Naive thymus-derived CD8-positive, alpha-beta T cell (primary cell): ENCODE measurements at regions of chr6 and their contacts with region 1.

Region 1: GRCh38 chr6:33344701-33345697 is 27.5 kb upstream of the ZBTB22 start:
- DNase-seq: peak; percentile 46 to 88 (median 74)
- ATAC-seq: peak; percentile 56 to 64
- H3K4me3 Mint-ChIP-seq: peak overlapping the region; percentile 73 to 91 (median 84)
- H3K27ac Mint-ChIP-seq: peak overlapping the region; percentile 91 to 99 (median 96)
- H3K4me1 Mint-ChIP-seq: peaks cover 28 to 54% (median 48%) of the 10 kb centered on the region in 4 donors
- H3K27me3 Mint-ChIP-seq: no peaks in the 10 kb centered on the region

Region 2: DNA sequence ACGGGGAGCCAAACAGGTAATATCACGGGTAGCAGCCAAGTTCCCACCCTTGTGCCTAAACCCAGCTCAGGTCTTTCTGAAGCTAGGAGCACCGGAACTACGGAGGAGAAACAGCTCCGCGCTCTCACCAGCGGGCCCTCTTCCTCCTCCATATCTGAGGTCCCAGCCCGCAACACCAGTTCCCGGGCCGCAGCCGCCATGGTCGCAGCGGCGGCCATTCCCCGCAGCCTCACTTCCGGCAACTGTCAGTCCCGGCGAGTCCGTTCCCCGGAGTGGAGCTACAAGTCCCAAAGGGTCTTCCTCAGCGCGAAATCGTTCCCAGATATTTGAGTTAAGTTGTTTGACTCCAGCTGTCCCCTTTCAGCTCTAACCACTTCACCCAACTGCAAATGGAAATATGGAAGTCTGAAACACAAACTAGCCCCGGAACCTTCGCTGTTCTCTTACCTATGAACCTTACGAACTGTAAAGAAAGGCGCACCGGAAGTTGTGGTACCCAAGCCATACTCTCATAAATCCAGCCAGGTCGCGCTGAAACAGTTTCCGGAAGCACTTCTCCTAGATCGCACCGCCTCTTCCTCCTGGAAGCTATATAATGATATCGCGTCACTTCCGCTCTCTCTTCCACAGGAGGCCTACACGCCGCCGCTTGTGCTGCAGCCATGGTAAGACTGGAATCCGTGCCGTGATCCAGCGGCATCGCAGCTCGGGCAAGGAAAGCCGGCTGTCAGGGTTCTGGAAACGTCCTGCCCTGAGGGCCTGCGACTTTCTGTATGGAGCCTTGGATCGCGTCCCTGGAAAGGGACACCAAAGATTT is 73.3 kb before region 1 on chr6 and contains the starts of genes RPS18 and VPS52:
- POLR2A ChIA-PET with region 1: interaction called, 71 read pairs
- DNase-seq: peak; percentile 78 to 100 (median 94)
- ATAC-seq: peak; percentile 86 to 88
- H3K4me3 Mint-ChIP-seq: peak within 1 kb of the TSS; percentile 92 to 99 (median 96)
- H3K27ac Mint-ChIP-seq: peak within 1 kb of the TSS; percentile 99 to 100 (median 99)
- H3K4me1 Mint-ChIP-seq: peaks cover 34 to 71% (median 70%) of the 10 kb centered on the region in 4 donors
- H3K27me3 Mint-ChIP-seq: no peaks in the 10 kb centered on the region
- polyA plus RNA-seq, gene RPS18: 9,896 to 11,320 (median 11,293) TPM
- polyA plus RNA-seq, gene VPS52: 9.3 to 19.3 (median 15.2) TPM

Region 3: DNA sequence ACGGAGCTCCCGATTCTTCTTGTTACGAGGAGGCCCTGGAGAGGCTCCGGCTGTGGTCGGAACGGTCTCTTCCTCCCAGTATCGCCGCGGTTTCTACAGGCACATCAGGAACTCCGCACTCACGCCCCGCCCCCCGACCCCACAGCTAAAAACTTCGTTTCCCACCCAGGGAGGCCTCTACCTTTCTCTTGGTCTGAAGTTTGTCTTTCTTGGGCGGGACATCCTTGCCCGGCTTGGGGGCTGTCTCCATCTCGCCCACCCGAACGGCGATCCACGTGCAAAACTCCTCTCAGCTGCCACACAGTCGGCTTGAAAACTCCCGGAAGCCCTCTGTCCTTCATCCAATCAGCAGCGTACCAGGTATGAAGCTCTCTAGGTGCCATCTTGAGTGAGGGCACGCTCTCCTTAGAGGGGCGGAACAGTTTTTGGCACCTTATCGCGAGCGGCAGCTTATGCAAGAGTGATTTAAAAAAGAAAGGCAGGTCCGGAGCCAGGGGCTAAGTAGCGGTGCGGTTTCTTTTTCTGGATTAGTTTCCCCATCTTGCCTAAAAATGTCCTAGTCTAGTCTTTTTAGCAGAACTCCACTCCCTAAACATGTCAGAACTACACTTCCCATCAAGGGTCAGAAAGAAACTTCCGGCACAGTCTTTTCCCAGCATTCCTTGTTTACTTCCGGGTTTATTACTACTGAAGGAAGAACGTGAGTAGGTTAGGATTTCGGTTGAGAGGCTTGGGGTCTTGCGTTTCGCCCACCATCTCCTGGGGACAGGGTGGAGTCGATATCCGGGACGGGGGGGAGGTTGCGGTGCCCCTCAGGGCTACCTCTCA is 55.9 kb before region 1 on chr6 and contains the starts of genes PFDN6 and WDR46:
- POLR2A ChIA-PET with region 1: interaction called, 52 read pairs
- DNase-seq: peak; percentile 53 to 91 (median 81)
- ATAC-seq: peak; percentile 96 to 97
- H3K4me3 Mint-ChIP-seq: peak within 1 kb of the TSS; percentile 87 to 100 (median 99)
- H3K27ac Mint-ChIP-seq: peak within 1 kb of the TSS; percentile 84 to 97 (median 94)
- H3K4me1 Mint-ChIP-seq: peaks cover 22 to 51% (median 48%) of the 10 kb centered on the region in 4 donors
- H3K27me3 Mint-ChIP-seq: no peaks in the 10 kb centered on the region
- polyA plus RNA-seq, gene PFDN6: 33.4 to 38.2 (median 35.5) TPM
- polyA plus RNA-seq, gene WDR46: 71.3 to 83.7 (median 74.1) TPM

Region 4: DNA sequence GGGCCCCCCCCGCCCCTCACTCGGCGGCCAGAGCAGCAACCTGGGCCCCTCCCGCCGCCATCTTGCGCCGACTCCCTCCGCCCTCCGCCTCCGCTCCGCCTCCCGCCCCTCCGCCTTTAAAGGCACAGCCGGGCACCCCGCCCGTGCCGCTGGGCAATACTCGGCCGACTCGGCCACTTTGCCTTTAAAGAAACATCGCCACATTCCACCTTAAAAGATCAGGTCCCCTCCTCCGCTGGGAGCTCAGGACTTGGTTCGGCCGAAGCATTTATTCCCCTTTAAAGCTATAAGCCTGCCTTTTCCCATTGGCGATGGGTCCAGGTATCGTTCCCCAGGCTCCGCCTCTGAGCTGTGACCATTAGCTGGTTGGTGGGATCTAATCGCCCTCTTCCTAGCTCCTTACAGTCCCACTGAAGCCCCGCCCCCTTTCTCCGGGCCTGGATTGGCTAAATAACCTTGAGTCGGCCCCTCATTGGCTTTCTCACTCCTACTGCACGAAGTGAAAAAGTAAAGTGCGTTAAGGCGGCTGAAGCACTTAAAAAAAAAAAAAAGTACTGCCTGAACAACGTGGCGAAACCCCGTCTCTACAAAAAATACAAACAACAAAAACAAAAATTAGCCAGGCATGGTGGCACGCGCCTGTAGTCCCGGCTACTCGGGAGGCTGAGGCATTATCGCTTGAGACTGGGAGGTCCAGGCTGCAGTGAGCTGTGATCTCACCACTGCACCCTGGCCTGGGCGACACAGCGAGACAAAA is 27.2 kb before region 1 on chr6 and contains the start of gene ZBTB22:
- POLR2A ChIA-PET with region 1: interaction called, 141 read pairs
- DNase-seq: peak; percentile 89 to 98 (median 94)
- ATAC-seq: peak; percentile 59 to 62
- H3K4me3 Mint-ChIP-seq: peak within 1 kb of the TSS in 9 of 10 donors; percentile 96 to 100 (median 99)
- H3K27ac Mint-ChIP-seq: peak within 1 kb of the TSS; percentile 95 to 100 (median 98)
- H3K4me1 Mint-ChIP-seq: peaks cover 36 to 87% (median 79%) of the 10 kb centered on the region in 4 donors
- H3K27me3 Mint-ChIP-seq: no peaks in the 10 kb centered on the region
- polyA plus RNA-seq, gene ZBTB22: 10.4 to 13.4 (median 10.7) TPM

Region 5: DNA sequence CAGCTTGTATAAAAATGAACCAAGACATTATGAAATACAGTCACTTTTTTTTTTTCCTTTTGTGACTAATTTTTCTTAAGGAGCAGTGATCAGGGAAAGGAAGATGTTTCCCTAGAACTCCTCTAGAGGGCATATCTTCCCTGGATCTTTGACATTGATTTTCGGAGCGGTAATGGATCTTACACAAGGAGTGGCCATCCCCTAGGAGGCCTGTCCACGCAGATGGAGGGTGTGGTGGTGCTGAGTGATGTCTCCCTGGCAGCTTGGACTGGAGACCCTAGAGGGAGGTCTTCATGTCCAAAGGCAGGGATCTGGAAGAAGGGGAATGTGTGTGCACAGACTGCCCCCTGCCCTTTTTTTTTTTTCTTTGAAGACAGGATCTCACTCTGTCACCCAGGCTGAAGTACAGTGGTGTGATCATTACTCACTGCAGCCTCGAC is 39.6 kb after region 1 on chr6:
- POLR2A ChIA-PET with region 1: no interaction called
- DNase-seq: no peak
- ATAC-seq: no peak
- H3K4me3 Mint-ChIP-seq: no peak overlapping the region
- H3K27ac Mint-ChIP-seq: peak overlapping the region in 1 of 10 donors; percentile 24
- H3K4me1 Mint-ChIP-seq: peaks cover 0 to 2% (median 0%) of the 10 kb centered on the region in 4 donors
- H3K27me3 Mint-ChIP-seq: no peaks in the 10 kb centered on the region

Region 6: GRCh38 chr6:33410050-33410710 is 65.2 kb after region 1 on chr6:
- POLR2A ChIA-PET with region 1: interaction called, 19 read pairs
- DNase-seq: peak; percentile 94 to 99 (median 96)
- ATAC-seq: peak; percentile 72 to 83
- H3K4me3 Mint-ChIP-seq: peak overlapping the region; percentile 74 to 96 (median 90)
- H3K27ac Mint-ChIP-seq: peak overlapping the region; percentile 63 to 99 (median 98)
- H3K4me1 Mint-ChIP-seq: peaks cover 20 to 53% (median 44%) of the 10 kb centered on the region in 4 donors
- H3K27me3 Mint-ChIP-seq: no peaks in the 10 kb centered on the region

Region 7: DNA sequence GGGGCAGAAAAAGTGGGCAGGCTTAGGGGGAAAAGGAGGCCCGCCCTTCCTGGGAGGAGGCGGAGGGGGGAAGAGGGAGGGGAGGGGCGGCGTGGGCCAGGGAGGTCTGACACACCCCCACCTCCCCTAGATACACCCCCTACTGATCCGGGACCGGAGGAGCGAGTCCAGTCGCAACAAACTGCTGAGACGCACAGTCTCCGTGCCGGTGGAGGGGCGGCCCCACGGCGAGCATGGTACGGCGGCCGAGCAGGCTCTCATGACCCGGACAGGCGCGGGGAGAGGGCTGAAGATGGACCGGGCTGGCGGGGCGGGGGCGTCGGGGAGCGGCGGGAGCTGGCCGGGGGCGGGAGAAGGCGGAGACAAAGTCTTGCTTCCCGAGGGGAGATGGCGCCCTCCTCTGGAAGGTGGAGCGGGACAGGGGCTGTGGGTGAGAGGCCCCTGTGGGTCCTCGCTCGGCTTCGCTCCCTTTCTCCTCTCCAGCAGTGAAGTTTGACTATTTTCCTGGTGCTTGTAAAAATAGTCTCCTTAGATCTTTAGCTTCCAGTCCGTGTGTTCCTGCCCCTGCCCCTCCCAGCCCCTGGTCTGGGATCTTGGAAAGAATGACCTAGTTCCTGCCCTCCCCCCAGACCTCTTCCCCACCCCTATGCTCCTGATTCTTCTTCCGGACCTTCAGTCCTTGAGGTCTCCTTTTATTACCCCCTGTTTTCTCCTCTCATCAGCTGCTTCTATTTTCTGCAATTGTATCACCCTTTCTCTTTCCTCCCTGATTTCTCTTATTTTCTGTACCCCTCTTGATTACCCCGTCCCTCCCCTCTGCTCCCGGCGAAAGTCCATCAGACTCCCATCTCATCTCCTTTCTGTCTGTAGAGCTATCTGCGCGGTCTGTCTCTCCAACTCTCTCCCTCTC is 80.9 kb after region 1 on chr6:
- POLR2A ChIA-PET with region 1: interaction called, 30 read pairs
- DNase-seq: peak; percentile 70 to 94 (median 80)
- ATAC-seq: peak; percentile 54 to 57
- H3K4me3 Mint-ChIP-seq: peak overlapping the region; percentile 87 to 97 (median 91)
- H3K27ac Mint-ChIP-seq: peak overlapping the region; percentile 93 to 99 (median 99)
- H3K4me1 Mint-ChIP-seq: peaks cover 61 to 90% (median 79%) of the 10 kb centered on the region in 4 donors
- H3K27me3 Mint-ChIP-seq: no peaks in the 10 kb centered on the region